Caco-2 (cell line): ENCODE measurements at regions of chr13 and their contacts with region 1.

Region 1: DNA sequence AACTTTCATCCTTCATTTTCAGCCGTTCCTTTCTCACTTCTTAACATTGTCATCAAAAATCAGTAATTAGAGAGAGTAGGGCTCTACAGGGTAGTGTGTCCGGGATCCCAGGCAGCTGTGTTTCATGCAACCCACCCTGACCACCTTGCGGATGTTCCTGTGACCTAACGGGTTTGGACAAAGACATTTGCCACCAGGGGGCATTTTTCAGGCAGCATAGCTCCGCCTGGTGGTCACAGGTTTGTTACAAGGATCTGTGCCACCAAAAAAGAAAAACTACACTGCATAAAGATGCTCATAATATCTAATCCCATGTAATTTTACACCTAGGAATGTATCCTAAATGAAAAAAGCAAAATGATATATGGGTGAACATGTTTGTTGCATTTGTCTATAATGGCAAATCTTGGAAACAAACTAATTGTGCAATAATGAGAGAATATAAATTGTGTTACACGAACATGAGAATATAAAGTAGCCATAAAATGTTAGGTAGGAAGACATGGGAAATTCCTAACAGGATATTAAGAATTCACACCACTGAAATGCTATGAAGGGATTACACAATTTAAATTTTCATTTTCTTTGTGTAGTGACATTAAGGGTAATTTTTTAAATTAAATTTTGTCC is 123.0 kb downstream of the SLC7A1 start:
- DNase-seq: peak; percentile 65 to 77
- H3K4me3 ChIP-seq: no peak overlapping the region
- H3K4me3 Mint-ChIP-seq: no peak overlapping the region
- H3K27ac Mint-ChIP-seq: no peak overlapping the region
- H3K4me1 ChIP-seq: no peaks in the 10 kb centered on the region
- H3K4me1 Mint-ChIP-seq: no peaks in the 10 kb centered on the region
- H3K27me3 ChIP-seq: no peaks in the 10 kb centered on the region
- H3K27me3 Mint-ChIP-seq: peaks cover 3% of the 10 kb centered on the region
- CTCF ChIP-seq: peak; percentile 98 to 100

Region 2: DNA sequence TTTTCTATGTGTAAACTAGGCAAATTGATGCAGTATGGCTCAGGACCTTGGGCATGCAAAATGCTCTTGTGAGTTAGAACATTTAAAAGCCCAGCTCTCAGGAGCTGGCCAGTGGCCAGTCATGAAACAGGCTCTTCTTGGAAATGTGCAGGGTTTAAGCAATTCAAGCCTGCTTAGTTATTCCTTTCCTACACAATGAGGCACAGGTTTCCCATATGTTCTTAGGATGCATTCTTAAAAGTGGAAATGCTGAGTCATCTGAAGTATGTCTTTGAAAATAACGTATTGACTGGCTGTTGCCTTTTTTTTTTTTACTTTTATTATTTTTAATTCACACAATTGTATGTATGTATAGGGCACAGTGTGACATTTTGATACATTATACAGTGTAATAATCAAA is 177.6 kb before region 1 on chr13:
- CTCF ChIA-PET with region 1: no interaction called
- POLR2A ChIA-PET with region 1: no interaction called
- intact Hi-C with region 1: loop called (anchors 10 kb)
- DNase-seq: no peak
- H3K4me3 ChIP-seq: no peak overlapping the region
- H3K4me3 Mint-ChIP-seq: no peak overlapping the region
- H3K27ac Mint-ChIP-seq: no peak overlapping the region
- H3K4me1 ChIP-seq: no peaks in the 10 kb centered on the region
- H3K4me1 Mint-ChIP-seq: no peaks in the 10 kb centered on the region
- H3K27me3 ChIP-seq: no peaks in the 10 kb centered on the region
- H3K27me3 Mint-ChIP-seq: peaks cover 5% of the 10 kb centered on the region
- CTCF ChIP-seq: no peak

Region 3: GRCh38 chr13:29362849-29363604 is 109.4 kb before region 1 on chr13:
- CTCF ChIA-PET with region 1: no interaction called
- POLR2A ChIA-PET with region 1: no interaction called
- intact Hi-C with region 1: loop called (anchors 5 kb)
- DNase-seq: peak in 1 of 2 experiments; percentile 71
- H3K4me3 ChIP-seq: no peak overlapping the region
- H3K4me3 Mint-ChIP-seq: no peak overlapping the region
- H3K27ac Mint-ChIP-seq: no peak overlapping the region
- H3K4me1 ChIP-seq: no peaks in the 10 kb centered on the region
- H3K4me1 Mint-ChIP-seq: no peaks in the 10 kb centered on the region
- H3K27me3 ChIP-seq: no peaks in the 10 kb centered on the region
- H3K27me3 Mint-ChIP-seq: peaks cover 17% of the 10 kb centered on the region
- CTCF ChIP-seq: peak; percentile 91 to 97

Region 4: GRCh38 chr13:29402166-29402636 is 70.2 kb before region 1 on chr13:
- CTCF ChIA-PET with region 1: no interaction called
- POLR2A ChIA-PET with region 1: no interaction called
- intact Hi-C with region 1: loop called (anchors 2 kb)
- DNase-seq: peak; percentile 75 to 84
- H3K4me3 ChIP-seq: no peak overlapping the region
- H3K4me3 Mint-ChIP-seq: peak overlapping the region; percentile 63
- H3K27ac Mint-ChIP-seq: peak overlapping the region; percentile 88
- H3K4me1 ChIP-seq: peaks cover 36% of the 10 kb centered on the region
- H3K4me1 Mint-ChIP-seq: peaks cover 44% of the 10 kb centered on the region
- H3K27me3 ChIP-seq: no peaks in the 10 kb centered on the region
- H3K27me3 Mint-ChIP-seq: no peaks in the 10 kb centered on the region
- CTCF ChIP-seq: no peak

Region 5: GRCh38 chr13:29707876-29708543 is 235.6 kb after region 1 on chr13:
- CTCF ChIA-PET with region 1: interaction called, 3 read pairs
- POLR2A ChIA-PET with region 1: no interaction called
- intact Hi-C with region 1: loop called (anchors 1 kb)
- DNase-seq: peak; percentile 69 to 76
- H3K4me3 ChIP-seq: no peak overlapping the region
- H3K4me3 Mint-ChIP-seq: no peak overlapping the region
- H3K27ac Mint-ChIP-seq: no peak overlapping the region
- H3K4me1 ChIP-seq: no peaks in the 10 kb centered on the region
- H3K4me1 Mint-ChIP-seq: no peaks in the 10 kb centered on the region
- H3K27me3 ChIP-seq: no peaks in the 10 kb centered on the region; the same call in 1 of the 2 replicates
- H3K27me3 Mint-ChIP-seq: peaks cover 12% of the 10 kb centered on the region
- CTCF ChIP-seq: peak; percentile 58 to 74

Region 6: GRCh38 chr13:29721766-29722165 is 249.3 kb after region 1 on chr13:
- CTCF ChIA-PET with region 1: no interaction called
- POLR2A ChIA-PET with region 1: no interaction called
- intact Hi-C with region 1: no loop called
- DNase-seq: no peak
- H3K4me3 ChIP-seq: no peak overlapping the region
- H3K4me3 Mint-ChIP-seq: no peak overlapping the region
- H3K27ac Mint-ChIP-seq: no peak overlapping the region
- H3K4me1 ChIP-seq: no peaks in the 10 kb centered on the region
- H3K4me1 Mint-ChIP-seq: peaks cover 7% of the 10 kb centered on the region
- H3K27me3 ChIP-seq: no peaks in the 10 kb centered on the region
- H3K27me3 Mint-ChIP-seq: peaks cover 6% of the 10 kb centered on the region
- CTCF ChIP-seq: no peak